ENCODE measurements at regions of chr17 and their contacts with region 1.

Region 1: DNA sequence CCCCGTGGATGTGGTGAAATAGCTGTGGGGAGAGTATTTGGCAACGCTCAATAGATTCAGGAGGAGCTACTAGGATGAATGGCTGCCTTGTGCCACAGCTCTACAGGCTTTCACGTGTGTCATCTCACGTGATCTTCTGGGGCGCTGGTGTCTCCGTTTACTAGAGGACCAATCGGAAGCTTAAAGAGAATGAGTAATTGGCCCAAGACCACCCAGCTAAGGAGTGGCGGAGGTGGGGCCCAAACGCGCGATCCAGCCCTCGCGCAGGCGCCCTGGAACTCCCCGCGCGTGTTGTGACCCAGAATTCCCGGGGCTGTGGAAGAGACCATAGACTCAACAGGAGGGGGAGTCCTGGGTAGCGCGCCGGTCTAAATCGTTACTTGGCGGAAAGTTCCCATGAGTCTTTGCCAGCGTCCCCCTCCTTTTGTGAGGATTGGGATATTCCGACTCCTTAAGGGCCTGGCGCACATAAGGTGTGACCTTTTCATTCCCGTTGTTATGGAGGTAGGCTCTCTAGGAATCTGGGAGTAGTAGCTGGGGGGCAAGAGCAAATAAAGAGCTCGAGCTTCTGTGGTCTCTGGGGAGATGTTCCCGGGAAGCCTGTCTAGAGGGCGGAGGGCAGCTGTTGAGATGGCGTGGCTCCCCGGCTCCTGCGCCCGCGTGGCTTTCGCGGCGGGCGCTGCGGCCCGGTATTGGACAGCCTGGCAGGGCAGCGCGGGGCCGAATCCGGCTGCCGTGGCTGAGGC is 23.4 kb downstream of the TRPV2 start:
- H3K4me3 Mint-ChIP-seq: peak overlapping the region; percentile 96
- H3K27ac Mint-ChIP-seq: peak overlapping the region; percentile 81
- H3K4me1 Mint-ChIP-seq: peaks cover 69% of the 10 kb centered on the region
- H3K27me3 Mint-ChIP-seq: no peaks in the 10 kb centered on the region

Region 2: GRCh38 chr17:15502369-15503112 is 936.2 kb before region 1 on chr17:
- intact Hi-C with region 1: no loop called
- H3K4me3 Mint-ChIP-seq: peak overlapping the region; percentile 11
- H3K27ac Mint-ChIP-seq: peak overlapping the region; percentile 17
- H3K4me1 Mint-ChIP-seq: peaks cover 7% of the 10 kb centered on the region
- H3K27me3 Mint-ChIP-seq: peaks cover 3% of the 10 kb centered on the region

Region 3: GRCh38 chr17:16313139-16314090 is 125.3 kb before region 1 on chr17:
- intact Hi-C with region 1: no loop called
- H3K4me3 Mint-ChIP-seq: no peak overlapping the region
- H3K27ac Mint-ChIP-seq: no peak overlapping the region
- H3K4me1 Mint-ChIP-seq: no peaks in the 10 kb centered on the region
- H3K27me3 Mint-ChIP-seq: no peaks in the 10 kb centered on the region

Region 4: GRCh38 chr17:16380640-16381495 is 57.9 kb before region 1 on chr17 and contains the start of gene UBB:
- intact Hi-C with region 1: loop called (anchors 5 kb)
- H3K4me3 Mint-ChIP-seq: peak within 1 kb of the TSS; percentile 89
- H3K27ac Mint-ChIP-seq: peak within 1 kb of the TSS; percentile 100
- H3K4me1 Mint-ChIP-seq: peaks cover 24% of the 10 kb centered on the region
- H3K27me3 Mint-ChIP-seq: no peaks in the 10 kb centered on the region

Region 5: DNA sequence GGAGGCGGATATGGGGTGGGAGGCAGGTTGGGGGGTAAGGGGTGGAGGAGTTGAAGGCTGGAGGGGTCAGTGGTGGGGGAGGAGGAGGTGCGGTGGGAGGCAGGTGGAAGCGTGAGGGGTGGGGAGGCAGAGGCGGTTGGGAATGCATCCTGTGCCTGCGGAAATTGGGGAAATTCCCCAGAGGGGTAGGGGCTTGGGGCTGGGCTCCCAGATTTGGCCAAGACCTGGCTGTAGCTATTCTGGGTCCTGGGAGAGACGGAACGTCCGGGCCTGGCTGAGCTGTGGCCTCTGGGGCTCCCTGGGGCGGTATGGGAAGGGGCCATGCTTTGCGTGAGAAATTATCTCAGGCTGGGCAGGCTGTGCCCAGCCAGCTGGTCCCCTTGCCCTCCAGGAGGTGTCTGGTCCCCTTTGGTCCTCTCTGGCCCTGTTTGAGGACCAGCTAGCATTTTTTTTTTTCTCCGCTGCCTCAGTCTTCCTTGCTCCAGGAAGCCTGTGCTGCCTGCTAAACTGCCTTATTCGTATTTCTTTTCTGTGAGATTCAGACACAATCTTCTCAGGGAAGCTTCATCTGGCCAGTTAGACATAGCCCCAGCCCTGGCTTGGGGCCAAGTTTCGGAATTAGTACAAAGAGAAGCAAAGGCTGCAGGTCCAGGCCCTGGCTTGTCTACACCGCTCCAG is 30.7 kb before region 1 on chr17:
- intact Hi-C with region 1: no loop called
- H3K4me3 Mint-ChIP-seq: peak overlapping the region; percentile 39
- H3K27ac Mint-ChIP-seq: peak overlapping the region; percentile 75
- H3K4me1 Mint-ChIP-seq: peaks cover 51% of the 10 kb centered on the region
- H3K27me3 Mint-ChIP-seq: peaks cover 21% of the 10 kb centered on the region

Region 6: DNA sequence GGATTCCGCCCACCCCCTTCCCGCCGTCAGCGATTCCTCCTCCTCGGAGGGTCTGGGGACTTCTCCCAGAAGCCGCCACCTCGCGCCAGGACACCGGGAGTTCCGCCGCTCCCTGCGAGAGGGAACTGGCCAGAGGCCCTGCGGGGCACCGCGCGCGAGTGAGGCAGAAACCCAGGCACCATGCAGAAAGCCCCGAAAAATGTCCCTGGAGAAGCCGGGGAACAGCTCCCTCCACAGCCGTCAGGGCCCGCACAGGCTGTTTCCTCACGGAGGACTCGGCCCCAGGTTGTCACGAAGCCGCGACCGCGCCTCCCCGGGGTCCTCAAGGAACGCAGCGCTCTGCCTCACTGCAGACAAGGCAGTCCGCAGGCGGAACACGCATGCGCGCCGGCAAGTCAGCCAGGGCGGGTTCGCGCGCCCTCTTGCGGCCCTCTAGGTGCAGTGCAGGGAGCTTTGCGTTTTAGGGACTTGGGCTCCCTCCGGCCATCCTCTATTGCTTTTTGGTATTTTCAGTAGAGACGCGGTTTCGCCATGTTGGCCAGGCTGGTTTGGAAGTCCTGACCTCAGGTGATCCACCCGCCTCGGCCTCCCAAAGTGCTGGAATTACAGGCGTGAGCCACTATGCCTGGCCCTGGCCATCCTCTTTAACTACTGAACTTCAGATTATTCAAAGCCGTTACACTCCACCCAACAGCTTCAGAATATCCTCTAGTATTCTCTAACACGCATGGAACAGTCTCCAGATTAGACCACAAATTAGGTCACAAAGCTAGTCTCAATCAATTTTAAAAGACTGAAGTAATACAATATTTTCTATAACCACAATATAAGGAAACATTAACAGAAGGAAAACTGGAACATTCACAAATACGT is 150.6 kb after region 1 on chr17:
- intact Hi-C with region 1: no loop called
- H3K4me3 Mint-ChIP-seq: peak overlapping the region; percentile 75
- H3K27ac Mint-ChIP-seq: peak overlapping the region; percentile 59
- H3K4me1 Mint-ChIP-seq: peaks cover 25% of the 10 kb centered on the region
- H3K27me3 Mint-ChIP-seq: peaks cover 36% of the 10 kb centered on the region